SK-MEL-5 (cell line): ENCODE measurements at regions of chr1 and their contacts with region 1.

Region 1: GRCh38 chr1:224427346-224427745 is 7.3 kb downstream of the WDR26 start:
- DNase-seq: no peak

Region 2: DNA sequence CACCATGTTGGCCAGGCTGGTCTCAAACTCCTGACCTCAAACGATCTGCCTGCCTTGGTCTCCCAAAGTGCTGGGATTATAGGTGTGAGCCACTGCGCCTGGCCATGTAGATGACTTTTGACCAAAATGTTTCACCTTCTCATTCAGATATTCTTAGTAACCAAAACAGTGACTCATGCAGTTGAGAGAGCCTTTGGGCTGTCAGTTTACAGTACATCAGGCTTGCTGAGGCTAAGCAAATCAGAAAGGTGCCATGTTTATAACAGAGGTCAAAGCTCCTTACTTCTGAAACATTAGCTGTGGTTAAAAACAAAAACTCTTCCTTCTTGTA is 49.7 kb before region 1 on chr1:
- in situ Hi-C with region 1: loop called (anchors 10 kb)
- DNase-seq: no peak

Region 3: GRCh38 chr1:224615861-224616755 is 188.8 kb after region 1 on chr1 and contains the start of gene CNIH3:
- in situ Hi-C with region 1: no loop called
- DNase-seq: peak; percentile 22
- total RNA-seq, gene CNIH3: 3.1 and 6.4 TPM in 2 replicates